Gastrocnemius medialis (tissue), 4 donors: ENCODE measurements at regions of chr5 and their contacts with region 1.

Region 1: DNA sequence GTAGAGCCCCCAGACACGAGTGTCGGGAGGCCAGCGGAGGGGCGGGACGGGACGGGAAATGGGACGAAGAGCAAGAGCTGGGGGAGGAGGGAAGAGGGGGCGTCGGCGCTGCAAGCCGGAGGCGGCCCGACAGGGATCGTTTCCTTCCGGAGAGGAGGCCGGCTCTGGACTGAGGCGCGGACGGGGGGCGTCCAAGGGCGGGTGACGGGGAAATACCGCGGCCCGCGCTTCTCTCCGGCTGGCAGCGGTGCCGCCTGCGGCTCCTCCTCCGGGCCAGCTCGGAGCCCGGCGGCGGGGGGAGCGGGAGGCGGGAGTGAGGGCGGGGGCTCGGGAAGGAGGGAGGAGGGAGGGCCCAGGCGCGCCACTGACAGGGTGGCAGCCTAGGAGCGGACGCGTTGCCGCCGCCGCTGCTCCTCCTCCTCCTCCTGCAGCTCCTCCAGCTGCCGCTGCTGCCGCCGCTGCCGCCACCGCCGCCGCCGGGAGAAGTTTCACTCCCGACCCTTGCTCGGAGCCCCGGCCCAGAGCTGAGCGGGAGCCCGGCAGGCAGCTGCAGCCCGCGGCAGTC is at the start of gene CHSY3:
- DNase-seq: peak; percentile 69 to 75
- ATAC-seq: peak; percentile 85 to 87
- H3K4me3 ChIP-seq: peak within 1 kb of the TSS; percentile 68 to 84 (median 76)
- H3K27ac ChIP-seq: peak within 1 kb of the TSS; percentile 71 to 80 (median 75)
- H3K4me1 ChIP-seq: peaks cover 9 to 19% of the 10 kb centered on the region in 2 donors
- H3K27me3 ChIP-seq: peaks cover 5 to 17% (median 6%) of the 10 kb centered on the region in 3 donors
- CTCF ChIP-seq: peak in 2 of 5 experiments; percentile 30 to 53
- POLR2A ChIP-seq: peak; percentile 38 to 63
- total RNA-seq, gene CHSY3: 0.51 to 7.8 (median 2.2) TPM

Region 2: DNA sequence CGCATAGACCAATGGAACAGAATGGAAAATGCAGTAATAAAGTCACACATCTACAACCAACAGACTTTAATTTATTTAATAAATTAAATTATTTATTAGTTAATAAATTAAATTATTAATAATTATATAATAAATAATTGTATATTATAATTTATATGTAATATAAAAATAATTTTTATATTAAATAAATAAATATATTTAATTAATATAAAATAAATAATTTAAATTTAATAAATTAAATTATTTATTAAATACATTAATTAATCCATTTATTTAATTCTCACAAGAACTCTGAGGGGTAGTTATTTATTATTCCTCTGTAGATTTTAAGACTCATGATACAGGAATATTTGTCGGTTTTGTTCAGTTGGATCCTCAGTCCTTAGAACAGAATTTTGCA is 620.2 kb before region 1 on chr5:
- in situ Hi-C with region 1: no loop called
- intact Hi-C with region 1: no loop called
- DNase-seq: no peak
- ATAC-seq: no peak
- H3K4me3 ChIP-seq: no peak overlapping the region
- H3K27ac ChIP-seq: no peak overlapping the region
- H3K4me1 ChIP-seq: no peaks in the 10 kb centered on the region
- H3K27me3 ChIP-seq: no peaks in the 10 kb centered on the region
- CTCF ChIP-seq: no peak
- POLR2A ChIP-seq: no peak

Region 3: DNA sequence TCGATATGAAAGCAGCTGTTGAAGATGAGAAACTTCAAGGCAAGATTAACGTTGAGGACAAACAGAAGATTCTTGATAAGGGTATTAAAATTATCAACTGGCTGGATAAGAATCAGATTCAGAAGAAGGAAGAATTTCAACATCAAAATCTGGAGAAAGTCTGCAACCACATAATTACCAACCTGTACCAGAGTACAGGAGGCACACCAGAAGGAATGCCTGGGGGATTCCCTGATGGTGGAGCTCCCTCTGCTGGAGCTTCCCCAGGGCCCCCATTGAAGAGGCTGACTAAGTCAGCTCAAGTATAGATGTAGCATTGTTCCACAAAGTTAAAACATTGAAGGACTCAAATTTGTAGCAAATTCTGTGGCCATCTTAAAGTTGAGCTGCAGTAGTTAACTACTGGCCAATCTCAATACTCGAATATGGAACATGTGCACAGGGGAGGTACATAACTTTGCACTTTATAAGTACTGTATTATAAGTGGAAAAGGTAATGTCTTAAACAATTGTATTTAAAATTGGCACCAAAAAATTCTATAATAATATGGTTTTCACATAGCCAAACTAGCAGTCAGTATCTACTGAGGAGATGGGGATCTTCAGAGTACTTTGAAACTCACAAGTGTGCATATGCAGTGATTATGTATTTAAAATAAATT is 237.6 kb after region 1 on chr5:
- in situ Hi-C with region 1: no loop called
- intact Hi-C with region 1: loop called (anchors 2 kb)
- DNase-seq: no peak
- ATAC-seq: no peak
- H3K4me3 ChIP-seq: no peak overlapping the region
- H3K27ac ChIP-seq: no peak overlapping the region
- H3K4me1 ChIP-seq: no peaks in the 10 kb centered on the region
- H3K27me3 ChIP-seq: no peaks in the 10 kb centered on the region
- CTCF ChIP-seq: peak in 2 of 5 experiments; percentile 40 to 49
- POLR2A ChIP-seq: no peak

Region 4: GRCh38 chr5:131109540-131110255 is 1205.5 kb after region 1 on chr5:
- in situ Hi-C with region 1: loop called in 2 of 4 experiments (anchors 25 kb)
- intact Hi-C with region 1: loop called (anchors 5 kb)
- DNase-seq: no peak
- ATAC-seq: no peak
- H3K4me3 ChIP-seq: no peak overlapping the region
- H3K27ac ChIP-seq: no peak overlapping the region
- H3K4me1 ChIP-seq: no peaks in the 10 kb centered on the region
- H3K27me3 ChIP-seq: no peaks in the 10 kb centered on the region
- CTCF ChIP-seq: peak; percentile 14 to 59 (median 48)
- POLR2A ChIP-seq: no peak

Region 5: DNA sequence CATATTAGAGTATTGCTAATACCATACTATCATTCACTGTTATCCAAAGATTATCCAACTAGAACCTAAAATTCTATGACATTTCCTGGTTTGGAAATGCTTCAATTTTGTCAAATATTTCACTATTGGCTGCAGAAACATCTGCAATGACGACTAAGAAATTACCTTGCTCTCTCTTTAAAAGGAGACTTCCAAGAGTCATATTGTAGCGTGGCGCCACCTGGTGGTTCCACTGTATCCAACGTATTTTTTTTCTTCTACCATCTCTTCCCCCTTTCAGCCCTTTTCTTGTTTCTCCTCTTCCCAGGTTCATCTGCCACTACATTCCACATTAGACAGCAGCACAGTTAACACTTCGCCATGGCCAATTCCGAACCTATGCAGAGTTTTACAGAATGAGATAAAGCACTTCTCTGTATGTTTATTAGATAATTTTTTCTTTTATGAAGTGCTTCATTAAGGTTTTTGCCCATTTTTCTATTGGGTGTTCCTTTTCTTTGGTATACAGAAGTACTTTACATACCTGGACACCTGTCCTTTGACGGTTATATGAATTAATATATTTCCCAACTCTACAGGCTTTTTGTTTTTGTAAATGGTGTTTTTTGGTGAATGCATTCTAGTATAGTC is 1513.2 kb after region 1 on chr5:
- in situ Hi-C with region 1: no loop called
- intact Hi-C with region 1: loop called (anchors 10 kb)
- DNase-seq: peak; percentile 37 to 58
- ATAC-seq: peak in 1 of 2 donors; percentile 71
- H3K4me3 ChIP-seq: no peak overlapping the region
- H3K27ac ChIP-seq: no peak overlapping the region
- H3K4me1 ChIP-seq: no peaks in the 10 kb centered on the region
- H3K27me3 ChIP-seq: no peaks in the 10 kb centered on the region
- CTCF ChIP-seq: peak; percentile 58 to 84 (median 65)
- POLR2A ChIP-seq: no peak